Heart left ventricle (tissue), 16 donors: ENCODE measurements at regions of chr13 and their contacts with region 1.

Region 1: GRCh38 chr13:96822895-96823294 is 171.4 kb downstream of the OXGR1 start:
- DNase-seq: no peak
- ATAC-seq: no peak
- H3K4me3 ChIP-seq: no peak overlapping the region
- H3K27ac ChIP-seq: no peak overlapping the region
- H3K4me1 ChIP-seq: no peaks in the 10 kb centered on the region
- H3K27me3 ChIP-seq: no peaks in the 10 kb centered on the region
- CTCF ChIP-seq: peak in 3 of 12 donors; percentile 13 to 14 (median 13)
- POLR2A ChIP-seq: no peak

Region 2: GRCh38 chr13:96871469-96871868 is 48.6 kb after region 1 on chr13:
- intact Hi-C with region 1: no loop called
- DNase-seq: no peak
- ATAC-seq: no peak
- H3K4me3 ChIP-seq: no peak overlapping the region
- H3K27ac ChIP-seq: no peak overlapping the region
- H3K4me1 ChIP-seq: no peaks in the 10 kb centered on the region
- H3K27me3 ChIP-seq: peaks cover 0 to 8% (median 0%) of the 10 kb centered on the region in 9 donors
- CTCF ChIP-seq: no peak
- POLR2A ChIP-seq: no peak

Region 3: DNA sequence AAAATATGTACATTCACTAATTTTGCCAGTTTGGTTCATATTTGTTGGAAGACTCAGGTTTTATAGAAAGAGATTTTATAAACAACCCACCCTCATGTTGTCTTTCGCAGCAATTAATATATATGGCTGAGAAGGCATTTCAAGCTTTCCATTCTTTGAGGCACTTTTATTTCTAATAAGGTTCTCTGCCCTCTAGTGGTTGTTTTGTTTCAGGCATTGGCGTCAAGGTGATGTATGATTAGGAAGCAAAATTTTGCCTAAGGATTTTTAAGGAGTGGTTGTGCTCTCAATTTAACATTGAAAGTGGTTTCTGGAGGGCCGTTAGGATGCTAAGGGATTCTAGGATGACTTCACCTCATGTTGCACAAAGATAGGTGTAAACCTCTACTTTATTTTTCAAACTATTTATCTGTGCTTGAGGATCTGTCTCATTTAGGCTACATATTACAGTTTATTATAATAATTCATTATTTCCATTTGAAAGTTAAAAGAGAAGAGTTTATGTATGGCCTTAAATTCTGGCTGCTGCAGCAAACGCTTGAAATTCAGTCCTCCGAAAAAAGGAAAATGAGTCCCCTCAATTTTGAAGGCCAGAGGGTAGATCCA is 135.5 kb after region 1 on chr13:
- intact Hi-C with region 1: loop called in 1 of 10 experiments (anchors 10 kb)
- DNase-seq: no peak
- ATAC-seq: no peak
- H3K4me3 ChIP-seq: no peak overlapping the region
- H3K27ac ChIP-seq: no peak overlapping the region
- H3K4me1 ChIP-seq: no peaks in the 10 kb centered on the region
- H3K27me3 ChIP-seq: no peaks in the 10 kb centered on the region
- CTCF ChIP-seq: peak; percentile 65 to 78 (median 74)
- POLR2A ChIP-seq: no peak